B cell (primary cell): ENCODE measurements at regions of chr22 and their contacts with region 1.

Region 1: DNA sequence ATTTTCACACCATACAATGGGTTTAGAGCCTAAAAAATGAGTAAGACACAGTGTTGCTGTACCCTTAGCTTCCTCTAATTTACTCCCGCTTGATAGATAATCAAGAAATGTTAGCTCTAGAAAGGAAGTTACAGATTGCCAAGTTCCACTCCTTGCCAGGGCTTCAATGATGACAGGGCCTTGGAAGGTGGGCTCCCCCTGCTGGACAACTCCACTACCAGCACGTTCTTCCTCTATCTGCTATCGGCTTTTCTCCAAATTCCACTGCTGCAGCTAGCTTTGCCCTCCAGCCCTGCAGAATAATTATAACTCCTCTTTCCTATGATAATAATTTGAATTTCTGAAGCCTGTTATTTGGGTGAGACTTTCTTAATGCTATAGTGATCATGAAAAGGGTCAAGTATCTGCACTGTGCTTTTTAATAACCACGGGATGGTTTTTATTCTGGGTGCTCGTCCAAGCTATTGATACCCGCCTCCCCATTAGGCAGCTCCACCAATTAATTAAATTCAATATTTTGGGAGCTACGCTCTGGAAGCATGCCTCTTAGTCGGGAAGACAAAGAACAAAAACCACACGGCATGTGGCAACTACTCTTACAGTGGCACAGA is 9.0 kb downstream of the SYN3 start:
- DNase-seq: peak; percentile 77
- ATAC-seq: peak; percentile 61
- H3K4me3 ChIP-seq: no peak overlapping the region
- H3K4me3 Mint-ChIP-seq: no peak overlapping the region
- H3K27ac ChIP-seq: no peak overlapping the region
- H3K27ac Mint-ChIP-seq: no peak overlapping the region
- H3K4me1 ChIP-seq: peaks cover 15 to 21% of the 10 kb centered on the region in 2 donors
- H3K4me1 Mint-ChIP-seq: peaks cover 17% of the 10 kb centered on the region
- H3K27me3 ChIP-seq: peaks cover 0 to 18% (median 10%) of the 10 kb centered on the region in 4 experiments
- H3K27me3 Mint-ChIP-seq: peaks cover 39% of the 10 kb centered on the region
- CTCF ChIP-seq: peak; percentile 99

Region 2: GRCh38 chr22:33036881-33037280 is 12.3 kb before region 1 on chr22:
- CTCF ChIA-PET with region 1: interaction called, 10 read pairs
- POLR2A ChIA-PET with region 1: no interaction called
- intact Hi-C with region 1: no loop called
- DNase-seq: no peak
- ATAC-seq: no peak
- H3K4me3 ChIP-seq: no peak overlapping the region
- H3K4me3 Mint-ChIP-seq: no peak overlapping the region
- H3K27ac ChIP-seq: no peak overlapping the region
- H3K27ac Mint-ChIP-seq: no peak overlapping the region
- H3K4me1 ChIP-seq: no peaks in the 10 kb centered on the region
- H3K4me1 Mint-ChIP-seq: no peaks in the 10 kb centered on the region
- H3K27me3 ChIP-seq: peaks cover 0 to 6% (median 0%) of the 10 kb centered on the region in 4 experiments
- H3K27me3 Mint-ChIP-seq: peaks cover 25% of the 10 kb centered on the region
- CTCF ChIP-seq: no peak